ENCODE measurements at regions of chr5 and their contacts with region 1.

Region 1: DNA sequence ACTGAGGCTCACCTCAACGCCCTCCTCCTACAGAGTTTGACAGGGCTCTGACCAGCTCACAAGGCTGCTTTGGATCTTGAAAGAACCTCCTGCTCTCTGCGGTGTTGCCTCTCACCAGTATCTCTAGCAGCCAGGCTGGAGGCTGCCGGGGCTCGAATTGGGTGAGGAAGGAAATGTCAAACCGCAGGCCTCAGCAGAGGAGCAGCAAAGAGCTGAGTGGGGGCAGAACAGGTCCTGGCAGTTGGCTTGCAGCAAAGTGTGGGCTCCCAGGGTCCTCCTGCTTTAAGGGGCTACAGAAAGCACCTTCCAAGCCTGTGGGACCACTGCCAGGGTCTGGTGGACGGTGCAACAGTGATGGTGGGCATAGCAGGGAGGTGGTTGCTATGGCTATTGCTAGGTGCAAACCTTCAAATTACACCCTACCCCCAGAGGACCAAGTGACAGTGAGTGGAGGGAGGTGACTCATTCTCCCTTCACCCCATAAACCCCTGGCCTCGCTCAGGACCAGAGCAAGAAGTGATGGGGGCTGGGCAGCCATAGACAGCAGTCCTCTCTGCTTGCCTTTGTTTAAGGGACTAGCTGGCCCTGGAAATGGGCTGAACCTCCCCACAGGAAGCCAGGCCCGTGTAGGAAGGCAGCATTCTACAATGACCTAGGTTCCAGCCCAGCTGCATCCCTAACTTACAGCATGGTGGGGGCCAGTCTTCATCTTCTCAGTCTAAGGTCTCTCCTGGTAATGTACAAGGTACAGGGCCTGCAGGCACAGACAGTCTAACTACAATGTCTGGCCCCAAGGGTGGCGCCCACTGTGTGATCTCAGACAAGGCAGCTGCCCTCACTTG is 18.7 kb downstream of the LCP2 start:
- DNase-seq: no peak
- H3K4me3 ChIP-seq: no peak overlapping the region
- H3K27ac ChIP-seq: no peak overlapping the region; the same call in 1 of the 2 replicates
- H3K4me1 ChIP-seq: peaks cover 8 to 20% (median 18%) of the 10 kb centered on the region in 4 experiments
- H3K27me3 ChIP-seq: no peaks in the 10 kb centered on the region
- CTCF ChIP-seq: no peak
- EP300 ChIP-seq: no peak
- POLR2A ChIP-seq: no peak
- RAD21 ChIP-seq: no peak

Region 2: GRCh38 chr5:170148430-170149205 is 130.2 kb before region 1 on chr5:
- CTCF ChIA-PET with region 1: no interaction called
- POLR2A ChIA-PET with region 1: no interaction called
- DNase-seq: peak in 1 of 2 experiments; percentile 17
- H3K4me3 ChIP-seq: no peak overlapping the region
- H3K27ac ChIP-seq: no peak overlapping the region; the same call in 1 of the 2 replicates
- H3K4me1 ChIP-seq: peaks cover 0 to 5% (median 3%) of the 10 kb centered on the region in 4 experiments; a peak in 4 of 7 replicates
- H3K27me3 ChIP-seq: no peaks in the 10 kb centered on the region; a peak in 1 of 7 replicates
- CTCF ChIP-seq: no peak
- EP300 ChIP-seq: no peak
- POLR2A ChIP-seq: no peak
- RAD21 ChIP-seq: no peak

Region 3: DNA sequence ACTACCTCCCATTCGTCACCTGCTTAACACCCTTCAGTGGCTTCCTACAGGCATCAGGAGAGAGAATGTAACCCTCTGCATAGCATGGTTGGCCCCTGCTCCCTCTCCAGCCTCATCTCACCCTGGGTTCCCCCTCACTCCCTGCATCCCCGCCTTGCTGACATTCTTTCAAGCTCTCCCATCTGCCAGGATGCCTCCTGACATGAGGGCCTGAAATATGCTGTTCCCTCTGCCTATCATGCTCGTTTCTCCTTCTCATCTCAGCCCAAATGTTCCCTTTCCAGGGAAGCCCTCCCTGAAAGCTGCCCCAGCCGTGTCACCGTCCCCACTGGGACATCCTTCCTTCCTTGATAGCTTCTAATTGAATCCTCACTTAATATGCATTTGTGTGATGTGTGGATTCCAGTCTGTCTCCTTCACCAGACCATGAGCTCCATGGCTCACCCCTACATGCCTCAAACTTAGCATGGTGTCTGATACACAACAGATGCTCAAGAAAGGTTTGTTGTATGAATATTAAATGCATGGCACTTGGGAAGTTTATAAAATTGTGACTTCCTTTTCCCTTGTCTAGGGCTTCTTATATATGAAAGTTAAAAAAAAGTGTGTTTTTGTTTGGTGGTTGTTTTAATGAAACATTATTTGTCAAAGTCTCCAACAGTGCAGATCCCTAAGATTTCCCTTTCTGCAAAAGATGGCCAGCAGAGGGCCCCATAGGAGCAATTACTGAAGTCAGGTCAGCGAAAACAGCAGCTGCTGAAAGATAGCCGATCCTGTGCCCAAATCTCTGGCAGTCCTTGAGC is 53.3 kb before region 1 on chr5:
- CTCF ChIA-PET with region 1: interaction called, 36 read pairs
- POLR2A ChIA-PET with region 1: no interaction called
- DNase-seq: peak in 1 of 2 experiments; percentile 84
- H3K4me3 ChIP-seq: no peak overlapping the region
- H3K27ac ChIP-seq: no peak overlapping the region
- H3K4me1 ChIP-seq: peaks cover 0 to 7% (median 2%) of the 10 kb centered on the region in 4 experiments; a peak in 4 of 7 replicates
- H3K27me3 ChIP-seq: peaks cover 0 to under 1% (median under 1%) of the 10 kb centered on the region in 4 experiments; a peak in 2 of 7 replicates
- CTCF ChIP-seq: peak; percentile 29 to 85 (median 65)
- EP300 ChIP-seq: no peak
- POLR2A ChIP-seq: no peak
- RAD21 ChIP-seq: peak; percentile 95 to 96

Region 4: DNA sequence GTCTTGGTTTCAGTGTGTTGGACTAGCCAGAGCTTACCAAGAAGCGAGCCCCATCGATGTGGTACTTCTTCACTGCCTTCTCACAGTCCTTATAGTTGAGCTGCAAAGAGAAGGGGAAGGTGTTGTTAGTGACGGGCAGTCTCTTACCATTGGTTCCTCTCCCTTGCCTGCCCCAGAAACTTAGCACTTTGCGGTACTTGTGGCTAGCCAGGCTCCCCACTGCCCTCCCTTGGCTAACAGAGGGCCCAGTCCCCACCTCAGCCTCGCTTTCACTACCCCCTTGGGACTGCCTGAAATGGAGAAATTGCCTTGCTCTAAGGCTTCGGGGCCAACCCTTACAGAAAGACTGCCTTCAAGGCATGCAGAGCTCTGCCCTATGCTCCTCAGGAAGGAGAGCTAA is 14.4 kb after region 1 on chr5:
- CTCF ChIA-PET with region 1: interaction called, 12 read pairs
- POLR2A ChIA-PET with region 1: interaction called, 5 read pairs
- DNase-seq: no peak
- H3K4me3 ChIP-seq: no peak overlapping the region
- H3K27ac ChIP-seq: no peak overlapping the region
- H3K4me1 ChIP-seq: peaks cover 0 to 3% (median 1%) of the 10 kb centered on the region in 4 experiments; a peak in 2 of 7 replicates
- H3K27me3 ChIP-seq: peaks cover 0 to 1% (median 0%) of the 10 kb centered on the region in 4 experiments; a peak in 2 of 7 replicates
- CTCF ChIP-seq: no peak
- EP300 ChIP-seq: no peak
- POLR2A ChIP-seq: no peak
- RAD21 ChIP-seq: peak in 1 of 2 experiments; percentile 7; a peak in 1 of 4 replicates

Region 5: DNA sequence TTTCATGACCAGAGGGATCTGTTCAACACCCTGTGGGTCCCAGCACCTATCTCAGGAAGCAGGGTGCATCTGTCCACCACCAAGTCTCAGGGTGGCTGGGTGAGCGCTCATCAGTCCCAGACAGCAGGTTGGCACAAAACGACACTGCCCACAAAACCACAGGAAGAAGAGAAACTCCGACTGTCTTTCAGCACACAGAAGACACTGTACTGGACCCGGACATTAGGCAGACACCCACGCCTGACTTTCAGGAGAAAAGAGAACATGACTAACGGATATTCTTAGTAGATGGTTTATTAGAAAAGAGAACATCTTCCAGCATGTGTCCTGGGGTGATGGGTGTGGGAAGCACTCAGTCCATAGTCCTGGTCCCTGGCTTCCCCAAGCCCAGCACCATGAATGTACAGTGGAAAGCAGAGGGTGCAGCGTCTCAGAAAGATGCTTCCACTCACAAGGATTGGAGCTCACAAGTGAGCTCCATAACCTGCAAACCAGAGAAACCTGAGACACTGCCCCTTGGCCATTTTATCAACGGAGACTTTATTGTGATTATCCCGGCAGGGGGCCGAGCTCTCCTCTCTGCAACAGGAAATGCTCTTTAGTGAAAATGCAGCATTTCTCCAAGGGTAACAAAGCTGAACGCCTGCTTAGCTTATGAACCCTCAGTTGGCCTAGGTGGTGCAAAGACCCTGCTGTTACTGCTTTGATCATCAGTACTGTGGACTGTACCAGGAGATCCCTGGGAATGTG is 54.5 kb after region 1 on chr5:
- CTCF ChIA-PET with region 1: interaction called, 44 read pairs
- POLR2A ChIA-PET with region 1: interaction called, 3 read pairs
- DNase-seq: peak in 1 of 2 experiments; percentile 67
- H3K4me3 ChIP-seq: peak overlapping the region in 1 of 4 experiments; percentile 15; a peak in 2 of 8 replicates
- H3K27ac ChIP-seq: no peak overlapping the region
- H3K4me1 ChIP-seq: peaks cover 7 to 31% (median 23%) of the 10 kb centered on the region in 4 experiments
- H3K27me3 ChIP-seq: no peaks in the 10 kb centered on the region
- CTCF ChIP-seq: no peak
- EP300 ChIP-seq: no peak
- POLR2A ChIP-seq: no peak
- RAD21 ChIP-seq: no peak; a peak in 1 of 4 replicates

Region 6: DNA sequence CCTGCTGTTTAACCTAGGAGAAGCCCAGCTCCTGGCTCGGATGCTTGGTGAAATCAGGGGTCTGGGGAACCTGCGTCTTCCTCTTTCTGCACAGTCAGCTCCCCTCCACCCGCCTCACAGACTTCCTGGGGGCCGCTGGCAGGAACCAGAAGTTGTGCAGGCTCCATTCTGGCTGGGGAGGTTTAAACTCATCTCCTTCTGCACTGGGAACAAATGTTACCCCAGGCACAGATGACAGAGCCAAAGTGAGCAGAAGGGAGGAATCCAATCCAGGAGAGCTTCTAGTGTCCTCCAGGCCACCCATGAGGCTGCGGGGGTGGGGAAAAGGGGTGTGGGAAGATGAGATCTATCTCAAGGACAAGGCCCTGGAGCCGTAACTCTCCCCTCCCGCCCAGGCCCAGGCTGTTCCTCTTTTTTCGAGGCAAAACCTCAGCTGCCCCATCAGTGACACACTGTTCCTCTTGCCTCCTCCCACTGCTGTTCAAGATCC is 79.2 kb after region 1 on chr5:
- CTCF ChIA-PET with region 1: interaction called, 18 read pairs
- POLR2A ChIA-PET with region 1: no interaction called
- DNase-seq: no peak
- H3K4me3 ChIP-seq: no peak overlapping the region
- H3K27ac ChIP-seq: no peak overlapping the region
- H3K4me1 ChIP-seq: peaks cover 5 to 20% (median 13%) of the 10 kb centered on the region in 4 experiments
- H3K27me3 ChIP-seq: peaks cover 0 to 4% (median 1%) of the 10 kb centered on the region in 4 experiments; a peak in 3 of 7 replicates
- CTCF ChIP-seq: no peak
- EP300 ChIP-seq: no peak
- POLR2A ChIP-seq: no peak
- RAD21 ChIP-seq: no peak

Region 7: DNA sequence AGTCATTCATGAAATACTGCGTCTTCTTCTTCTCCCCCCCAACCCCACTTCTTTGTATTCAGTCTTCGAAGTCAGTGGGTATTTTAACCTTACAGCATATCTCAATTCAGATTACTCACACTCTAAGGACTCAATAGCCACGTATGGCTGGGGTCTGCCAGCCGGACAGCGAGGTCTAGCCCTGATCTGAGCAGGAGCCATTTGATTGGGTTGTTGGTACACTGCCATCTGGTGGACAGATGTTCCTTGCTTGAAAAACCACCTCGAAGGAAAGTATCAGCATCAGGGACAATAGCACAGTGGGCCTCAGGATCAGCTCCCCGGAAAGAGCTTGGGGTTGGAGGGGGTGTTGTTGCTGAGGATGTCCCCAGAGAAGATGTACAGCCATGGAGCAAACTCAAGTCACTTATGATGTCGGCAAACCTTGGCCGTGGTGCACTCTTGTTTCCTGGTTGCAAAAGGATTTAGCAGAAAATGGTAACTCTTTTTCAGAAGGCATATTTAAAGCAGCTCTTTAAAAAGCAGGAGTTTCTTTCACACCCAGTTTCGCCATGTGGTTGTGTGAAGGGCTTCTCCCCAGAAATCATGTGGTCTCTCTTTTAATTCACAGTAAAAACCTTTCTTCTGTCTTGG is 142.1 kb after region 1 on chr5:
- CTCF ChIA-PET with region 1: interaction called, 36 read pairs
- POLR2A ChIA-PET with region 1: no interaction called
- DNase-seq: peak in 1 of 2 experiments; percentile 72
- H3K4me3 ChIP-seq: no peak overlapping the region
- H3K27ac ChIP-seq: no peak overlapping the region
- H3K4me1 ChIP-seq: peaks cover 0 to 2% (median 0%) of the 10 kb centered on the region in 4 experiments; a peak in 2 of 7 replicates
- H3K27me3 ChIP-seq: no peaks in the 10 kb centered on the region
- CTCF ChIP-seq: peak; percentile 51 to 89 (median 87)
- EP300 ChIP-seq: no peak
- POLR2A ChIP-seq: no peak
- RAD21 ChIP-seq: peak; percentile 82 to 85

Measured in H1 (cell line).